Activated CD4-positive, alpha-beta T cell treated with anti-CD3 and anti-CD28 coated beads, Interleukin-2, amount 10 ng/mL, durations not matched to agents 24 days and 14 days (primary cell): ENCODE measurements at regions of chr2 and their contacts with region 1.

Region 1: DNA sequence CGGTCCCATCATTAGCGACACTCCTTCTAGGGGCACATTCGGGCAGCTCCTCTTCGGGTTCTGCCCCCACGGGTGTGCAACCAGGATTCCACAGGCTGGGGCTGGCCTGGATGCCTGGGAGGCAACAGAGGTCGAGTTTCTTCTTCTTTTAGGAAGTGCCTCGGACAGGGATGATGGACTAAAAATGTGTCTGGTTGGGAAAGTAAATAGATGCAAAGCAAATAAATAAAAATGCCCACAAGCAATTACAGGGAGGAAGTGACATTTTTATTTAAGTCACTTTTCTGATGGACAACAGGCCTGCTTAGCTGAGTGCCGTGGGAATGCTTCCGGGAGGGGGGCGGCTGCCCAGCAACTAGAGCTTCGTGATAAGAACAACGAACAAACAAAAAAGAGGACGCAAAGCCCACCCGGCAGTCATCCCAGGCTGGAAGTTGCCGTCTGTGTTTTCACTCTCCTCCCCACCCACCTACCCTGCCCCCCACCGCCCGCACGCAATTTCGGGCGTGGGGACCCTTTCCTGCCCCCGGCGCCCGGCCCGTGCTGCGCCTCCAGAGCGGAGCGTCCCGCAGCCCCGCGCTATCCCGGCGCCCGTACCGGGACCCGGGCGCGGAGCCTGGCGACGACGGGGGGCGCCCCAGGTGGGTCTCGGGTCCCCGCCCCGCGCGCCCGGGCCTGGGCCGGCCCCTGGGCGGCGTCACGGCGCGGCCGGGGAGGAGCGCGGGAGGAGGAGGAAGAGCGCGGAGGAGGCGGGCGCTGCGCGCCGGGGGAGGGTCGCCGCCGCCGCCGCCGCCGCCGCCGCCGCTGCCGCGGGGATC is 412 bp upstream of the NCK2 start:
- DNase-seq: peak; percentile 93
- H3K4me3 Mint-ChIP-seq: peak overlapping the region; percentile 83
- H3K27ac Mint-ChIP-seq: peak overlapping the region; percentile 90
- H3K4me1 Mint-ChIP-seq: peaks cover 65% of the 10 kb centered on the region
- H3K27me3 Mint-ChIP-seq: no peaks in the 10 kb centered on the region

Region 2: DNA sequence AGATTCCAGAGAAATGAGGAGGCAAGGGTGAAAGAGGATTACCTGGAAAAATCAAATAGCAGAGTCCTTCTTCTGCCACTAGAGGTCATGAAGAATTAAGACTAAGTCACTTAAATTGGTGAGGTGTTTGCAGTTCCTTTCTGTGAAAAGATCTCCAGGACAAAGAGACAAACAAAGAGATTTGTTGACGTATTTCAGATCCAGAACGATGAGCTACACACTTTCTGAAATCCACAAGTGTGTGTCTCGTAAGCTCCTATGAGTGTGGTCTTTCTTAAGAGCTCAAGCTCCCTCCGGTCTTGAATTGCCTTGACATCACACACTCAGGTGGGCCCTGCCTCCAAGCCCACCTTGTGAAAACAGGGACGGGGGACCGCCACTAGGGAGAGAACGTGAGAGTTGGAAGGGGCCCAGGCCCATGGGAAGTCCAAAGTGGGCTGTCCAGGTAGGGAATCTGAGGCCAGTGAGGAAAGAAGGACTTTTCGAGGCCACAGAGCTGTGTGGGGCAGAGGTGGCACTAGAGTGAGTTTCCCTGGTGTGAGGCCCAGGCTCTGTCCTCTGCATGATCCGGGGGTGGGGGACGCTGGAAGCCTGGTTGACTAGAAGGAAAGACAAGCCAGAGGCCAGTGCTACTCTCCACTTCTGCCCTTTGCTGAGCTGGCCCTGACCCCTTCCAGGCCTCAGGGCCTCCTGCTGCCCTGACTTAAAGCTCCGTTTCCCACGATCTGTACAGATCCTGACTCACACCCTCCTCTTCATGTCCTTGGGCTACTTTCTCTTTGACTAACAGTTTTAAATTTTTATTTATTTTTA is 167.7 kb before region 1 on chr2:
- intact Hi-C with region 1: loop called (anchors 2 kb)
- DNase-seq: peak; percentile 61
- H3K4me3 Mint-ChIP-seq: no peak overlapping the region
- H3K27ac Mint-ChIP-seq: peak overlapping the region; percentile 23
- H3K4me1 Mint-ChIP-seq: peaks cover 16% of the 10 kb centered on the region
- H3K27me3 Mint-ChIP-seq: peaks cover 7% of the 10 kb centered on the region

Region 3: DNA sequence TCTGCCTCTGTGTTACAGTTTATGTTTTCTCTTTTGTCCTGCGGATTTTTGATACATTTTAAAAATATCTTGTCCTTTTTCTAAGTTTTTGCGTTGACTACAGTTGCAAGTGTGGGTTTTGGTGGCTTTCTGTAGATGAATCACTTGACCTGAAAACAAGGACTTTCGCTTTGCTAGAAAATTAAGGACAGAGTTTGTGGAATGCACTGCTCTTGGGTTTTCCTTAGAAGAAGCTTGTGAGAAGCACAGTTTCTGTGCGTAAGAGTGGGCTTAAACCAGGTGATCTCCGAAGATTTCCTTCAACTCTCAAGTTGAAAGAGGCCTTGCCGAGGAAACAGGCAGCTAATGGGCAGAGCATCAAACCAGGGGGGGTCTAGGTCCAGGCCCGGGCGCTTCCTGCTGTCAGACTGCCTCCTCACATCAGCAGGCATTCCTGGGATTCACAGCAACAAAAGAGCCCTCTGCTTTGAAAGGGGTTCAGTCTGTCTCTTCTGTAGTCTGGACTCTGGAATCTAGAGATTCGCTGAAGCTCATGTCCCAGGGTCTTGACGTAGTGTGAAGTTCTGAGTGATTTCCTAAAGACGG is 17.7 kb after region 1 on chr2:
- intact Hi-C with region 1: no loop called
- DNase-seq: no peak
- H3K4me3 Mint-ChIP-seq: peak overlapping the region; percentile 52
- H3K27ac Mint-ChIP-seq: peak overlapping the region; percentile 90
- H3K4me1 Mint-ChIP-seq: peaks cover 76% of the 10 kb centered on the region
- H3K27me3 Mint-ChIP-seq: no peaks in the 10 kb centered on the region

Region 4: GRCh38 chr2:105797298-105797819 is 53.1 kb after region 1 on chr2:
- intact Hi-C with region 1: loop called (anchors 1 kb)
- DNase-seq: peak; percentile 85
- H3K4me3 Mint-ChIP-seq: peak overlapping the region; percentile 63
- H3K27ac Mint-ChIP-seq: peak overlapping the region; percentile 93
- H3K4me1 Mint-ChIP-seq: peaks cover 80% of the 10 kb centered on the region
- H3K27me3 Mint-ChIP-seq: no peaks in the 10 kb centered on the region

Region 5: DNA sequence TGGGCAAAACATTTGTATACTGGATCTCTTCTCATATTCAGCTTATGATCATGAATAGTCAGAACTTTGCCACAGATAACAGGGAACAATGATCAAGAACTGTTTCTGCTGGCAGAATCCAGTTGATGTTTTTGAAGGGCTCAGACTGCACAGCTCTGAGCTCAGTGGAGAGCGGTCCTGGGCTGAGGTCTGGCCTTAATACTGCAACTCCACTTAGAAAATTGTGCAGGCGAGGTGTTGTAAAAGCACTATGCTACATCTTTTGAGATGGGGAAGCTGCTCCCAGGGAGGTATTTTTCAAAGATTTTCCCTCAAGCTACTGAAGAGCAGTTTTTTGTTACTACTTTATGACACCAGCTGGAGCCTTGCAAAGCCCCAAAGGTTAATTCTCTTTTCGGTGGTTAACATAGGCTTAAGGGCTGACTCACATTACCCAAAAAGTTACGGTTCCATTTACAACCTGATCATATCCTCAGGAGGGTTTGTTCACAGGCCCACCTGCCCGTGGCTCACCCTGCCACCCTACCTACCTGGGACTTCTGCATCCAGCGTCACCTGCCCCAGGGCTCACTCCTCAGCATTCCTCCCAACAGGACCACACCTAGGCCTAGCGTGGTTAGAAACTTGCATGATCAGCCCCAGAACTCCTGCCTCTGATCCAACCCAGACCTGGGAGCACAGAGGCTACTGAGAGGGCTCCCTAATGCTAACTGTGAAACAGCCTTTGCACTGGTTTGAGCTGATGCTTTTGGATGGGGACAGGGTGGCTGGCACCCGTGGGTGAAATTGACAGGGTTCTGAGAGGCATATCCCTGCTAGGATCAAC is 114.8 kb after region 1 on chr2:
- intact Hi-C with region 1: loop called (anchors 1 kb)
- DNase-seq: peak; percentile 67
- H3K4me3 Mint-ChIP-seq: peak overlapping the region; percentile 74
- H3K27ac Mint-ChIP-seq: peak overlapping the region; percentile 92
- H3K4me1 Mint-ChIP-seq: peaks cover 77% of the 10 kb centered on the region
- H3K27me3 Mint-ChIP-seq: no peaks in the 10 kb centered on the region

Region 6: DNA sequence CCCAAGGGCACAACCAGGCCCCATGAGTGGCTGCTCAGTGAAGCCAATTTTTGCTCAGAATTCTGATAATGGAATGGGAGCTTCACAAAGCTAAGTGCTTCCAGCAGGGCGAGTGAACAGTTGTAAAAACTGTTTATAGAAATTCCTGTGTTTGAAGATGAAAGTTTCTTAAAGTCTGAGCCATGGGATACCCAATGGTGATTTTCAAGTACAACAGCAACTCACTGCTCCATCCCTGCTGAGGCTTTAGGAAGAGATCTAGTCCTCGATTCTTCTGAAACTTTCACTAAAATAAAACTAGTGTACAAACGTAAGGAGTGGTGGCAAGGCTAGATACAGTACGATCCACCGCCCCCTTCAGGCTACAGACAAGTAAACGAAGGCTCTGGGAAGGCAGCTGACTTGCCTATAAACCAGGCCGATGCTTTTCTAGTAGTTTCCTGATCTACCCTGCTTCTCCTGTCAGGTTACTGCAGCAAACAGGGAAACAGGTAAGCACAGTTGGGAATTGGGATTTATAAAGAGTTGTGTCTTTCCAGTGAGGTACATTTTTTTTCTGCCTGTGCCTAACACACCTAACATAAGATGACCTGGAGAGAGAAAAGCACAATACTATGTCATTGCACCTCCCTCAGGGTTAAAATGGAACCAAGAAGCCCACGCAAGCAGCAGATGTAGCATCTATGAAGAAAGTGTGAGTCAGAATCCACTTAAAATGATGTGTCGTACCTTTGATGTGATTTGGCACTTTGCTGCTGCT is 341.1 kb after region 1 on chr2:
- intact Hi-C with region 1: loop called (anchors 5 kb)
- DNase-seq: peak; percentile 86
- H3K4me3 Mint-ChIP-seq: peak overlapping the region; percentile 60
- H3K27ac Mint-ChIP-seq: peak overlapping the region; percentile 73
- H3K4me1 Mint-ChIP-seq: peaks cover 28% of the 10 kb centered on the region
- H3K27me3 Mint-ChIP-seq: no peaks in the 10 kb centered on the region

Region 7: DNA sequence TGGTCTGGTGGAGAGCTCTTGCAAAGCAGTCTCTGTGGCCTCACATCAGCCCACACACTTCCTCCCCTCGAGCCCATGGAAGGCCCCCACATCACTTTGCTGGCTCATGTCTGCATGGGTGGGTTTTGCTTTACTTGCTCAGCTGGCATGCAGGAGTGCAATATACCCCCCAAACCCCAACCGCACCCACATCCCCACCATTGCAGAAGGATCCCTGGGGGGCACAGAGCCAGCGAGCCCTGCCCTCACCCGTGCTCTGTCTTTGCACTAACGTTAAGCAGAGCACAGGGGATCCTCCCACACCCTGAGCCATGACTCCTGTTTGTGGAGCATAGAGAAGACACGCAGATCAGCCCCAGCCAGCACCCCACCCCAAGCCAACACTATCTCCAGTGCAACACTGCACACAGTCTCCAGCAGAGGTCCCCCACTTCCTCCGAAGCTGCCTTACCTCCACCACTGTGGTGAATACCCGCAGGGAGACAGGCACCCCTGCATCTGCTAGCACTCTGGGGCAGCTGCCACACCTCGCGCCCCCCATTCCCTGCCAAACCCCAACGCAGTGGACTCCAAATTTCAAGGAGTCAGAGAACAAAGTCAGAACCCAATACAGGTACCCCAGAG is 1904.6 kb after region 1 on chr2:
- intact Hi-C with region 1: no loop called
- DNase-seq: no peak
- H3K4me3 Mint-ChIP-seq: no peak overlapping the region
- H3K27ac Mint-ChIP-seq: no peak overlapping the region
- H3K4me1 Mint-ChIP-seq: no peaks in the 10 kb centered on the region
- H3K27me3 Mint-ChIP-seq: no peaks in the 10 kb centered on the region